ENCODE measurements at regions of chr3 and their contacts with region 1.

Region 1: DNA sequence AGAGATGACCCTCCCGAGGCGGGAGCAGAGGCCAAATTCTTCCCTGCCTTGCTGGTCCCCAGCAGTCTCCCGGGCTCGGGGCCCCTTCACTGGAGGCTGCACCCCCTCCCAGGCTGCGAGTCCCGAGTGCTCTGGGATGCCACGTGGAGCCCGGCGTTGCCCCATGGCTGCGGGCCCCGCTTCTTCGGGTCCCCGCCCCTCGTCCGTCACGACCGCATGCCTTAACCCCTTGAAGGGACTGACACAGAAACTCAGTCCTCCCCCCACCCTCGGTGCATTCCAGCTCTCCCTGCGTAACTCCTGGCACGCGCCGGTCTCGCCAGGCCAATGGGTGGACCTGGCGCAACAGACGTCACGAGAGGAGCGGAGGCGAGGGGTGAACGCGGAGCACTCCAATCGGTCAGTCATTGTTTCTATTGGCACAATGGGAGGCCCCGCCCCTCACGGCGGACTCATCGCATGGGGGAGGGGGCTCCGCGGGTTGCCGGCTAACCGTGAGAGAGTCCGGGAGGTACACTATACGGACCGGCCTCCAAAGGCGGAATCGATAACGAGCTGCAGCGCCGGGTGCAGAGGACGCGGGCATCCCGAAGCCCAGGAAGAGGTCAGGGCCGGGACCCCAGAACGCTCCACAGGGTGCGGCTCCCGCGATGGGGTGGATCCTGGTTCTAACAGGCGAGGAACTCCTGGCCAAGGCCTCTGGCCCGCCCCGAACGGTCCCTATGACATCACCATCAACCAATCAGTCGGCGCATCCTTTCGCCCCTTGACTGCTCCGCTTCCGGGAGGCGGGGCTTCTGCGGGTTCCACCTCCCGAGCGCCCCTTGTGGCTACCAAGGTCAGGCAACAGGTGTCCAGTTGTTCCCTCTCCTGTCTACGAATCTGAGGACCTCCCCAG is 978 bp upstream of the CELSR3 start:
- DNase-seq: peak; percentile 97
- H3K4me3 Mint-ChIP-seq: peak overlapping the region; percentile 88
- H3K27ac Mint-ChIP-seq: peak overlapping the region; percentile 74
- H3K4me1 Mint-ChIP-seq: peaks cover 15% of the 10 kb centered on the region
- H3K27me3 Mint-ChIP-seq: peaks cover 13% of the 10 kb centered on the region

Region 2: GRCh38 chr3:48716982-48717746 is 53.5 kb after region 1 on chr3 and contains the start of gene IP6K2:
- CTCF ChIA-PET with region 1: no interaction called
- POLR2A ChIA-PET with region 1: interaction called, 3 read pairs
- intact Hi-C with region 1: loop called (anchors 5 kb)
- DNase-seq: peak; percentile 100
- H3K4me3 Mint-ChIP-seq: peak within 1 kb of the TSS; percentile 96
- H3K27ac Mint-ChIP-seq: peak within 1 kb of the TSS; percentile 87
- H3K4me1 Mint-ChIP-seq: peaks cover 30% of the 10 kb centered on the region
- H3K27me3 Mint-ChIP-seq: no peaks in the 10 kb centered on the region
- total RNA-seq, gene IP6K2: 41.6 to 43.4 TPM

Region 3: DNA sequence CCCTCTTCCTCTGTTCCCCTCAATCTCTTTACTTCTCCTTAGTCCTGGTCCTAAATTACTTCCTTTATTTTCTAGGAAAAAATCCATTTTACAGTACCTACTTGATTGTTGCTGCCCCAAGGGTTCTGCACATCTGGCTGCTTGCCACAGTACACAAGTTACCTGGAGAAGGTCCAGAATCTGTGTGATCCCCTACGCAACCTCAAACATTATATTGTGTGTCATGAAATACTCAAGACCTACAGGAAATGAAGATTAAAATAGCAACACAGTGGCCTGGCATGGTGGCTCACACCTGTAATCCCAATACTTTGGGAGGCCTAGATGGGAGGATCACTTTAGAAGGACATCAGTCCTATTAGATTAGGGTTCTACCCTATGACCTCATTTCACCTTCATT is 135.3 kb after region 1 on chr3:
- CTCF ChIA-PET with region 1: no interaction called
- POLR2A ChIA-PET with region 1: no interaction called
- intact Hi-C with region 1: no loop called
- DNase-seq: no peak
- H3K4me3 Mint-ChIP-seq: no peak overlapping the region
- H3K27ac Mint-ChIP-seq: no peak overlapping the region
- H3K4me1 Mint-ChIP-seq: no peaks in the 10 kb centered on the region
- H3K27me3 Mint-ChIP-seq: no peaks in the 10 kb centered on the region